AG04449 (cell line): ENCODE measurements at regions of chr2 and their contacts with region 1.

Region 1: DNA sequence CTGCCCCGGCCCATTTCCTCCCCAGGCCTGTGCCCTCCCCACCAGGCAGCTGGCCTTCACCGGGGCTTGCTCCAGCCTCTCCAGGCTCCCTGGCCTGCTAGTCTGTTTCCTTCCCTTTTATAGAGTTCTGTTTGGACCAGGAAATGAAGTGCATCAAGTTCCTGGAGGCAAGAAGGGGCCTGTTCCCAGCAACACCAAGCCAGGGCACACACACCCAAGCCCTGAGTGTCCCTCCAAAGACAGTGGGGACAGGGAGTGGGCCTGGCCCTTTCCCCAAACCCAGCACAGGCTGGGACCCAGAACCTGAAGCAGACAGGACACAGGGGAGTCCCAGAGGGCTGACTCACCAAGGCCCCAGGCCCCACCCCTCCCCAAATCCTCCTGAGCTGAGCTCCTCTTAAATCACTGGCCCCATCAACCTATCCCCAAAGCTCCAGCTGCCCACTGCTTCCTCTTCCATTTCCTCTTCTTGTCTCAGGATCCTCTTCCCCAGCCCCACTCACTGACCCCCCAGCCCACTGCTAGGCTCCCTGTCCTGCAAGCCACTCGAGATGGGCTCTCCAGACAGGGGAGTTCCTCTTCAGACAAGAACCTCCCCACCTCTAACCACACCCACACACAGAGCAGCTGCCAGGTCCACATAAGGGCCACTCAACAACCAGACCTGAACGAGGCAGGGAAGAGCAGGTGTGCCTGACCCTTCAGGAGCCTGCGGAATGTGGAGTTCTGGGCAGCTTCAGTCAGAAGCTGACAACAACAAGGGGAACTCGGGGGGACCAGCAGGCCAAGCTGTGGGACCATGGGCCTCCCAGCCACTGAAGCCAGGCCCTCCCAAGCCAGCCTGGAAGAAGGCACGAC is 74.2 kb downstream of the TNS1 start:
- DNase-seq: no peak
- H3K4me3 ChIP-seq: no peak overlapping the region
- CTCF ChIP-seq: no peak

Region 2: GRCh38 chr2:217943446-217944389 is 15.2 kb after region 1 on chr2:
- CTCF ChIA-PET with region 1: interaction called, 6 read pairs
- POLR2A ChIA-PET with region 1: interaction called, 36 read pairs
- DNase-seq: no peak
- H3K4me3 ChIP-seq: peak overlapping the region; percentile 89
- CTCF ChIP-seq: peak; percentile 68

Region 3: DNA sequence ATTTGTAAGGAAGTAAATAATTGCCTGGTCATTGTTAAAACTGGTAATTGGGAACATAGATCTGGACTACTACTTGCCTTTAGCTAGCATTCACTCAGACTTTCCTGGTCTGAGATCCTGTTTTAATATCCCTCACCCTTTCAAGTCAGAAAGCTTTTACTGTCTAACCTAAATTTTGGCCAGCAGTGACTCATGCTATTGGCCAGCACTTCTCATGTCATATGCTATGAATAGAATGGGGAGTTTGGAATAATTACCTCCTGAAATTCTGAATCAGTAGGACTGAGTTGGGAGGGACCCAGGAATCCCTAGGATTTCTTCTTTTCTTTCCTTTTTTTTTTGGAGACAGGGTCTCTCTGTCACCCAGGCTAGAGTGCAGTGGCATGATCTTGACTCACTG is 762.7 kb after region 1 on chr2:
- CTCF ChIA-PET with region 1: no interaction called
- POLR2A ChIA-PET with region 1: no interaction called
- DNase-seq: no peak
- H3K4me3 ChIP-seq: no peak overlapping the region
- CTCF ChIP-seq: no peak